Posterior vena cava (tissue), 2 donors: ENCODE measurements at regions of chr1 and their contacts with region 1.

Region 1: DNA sequence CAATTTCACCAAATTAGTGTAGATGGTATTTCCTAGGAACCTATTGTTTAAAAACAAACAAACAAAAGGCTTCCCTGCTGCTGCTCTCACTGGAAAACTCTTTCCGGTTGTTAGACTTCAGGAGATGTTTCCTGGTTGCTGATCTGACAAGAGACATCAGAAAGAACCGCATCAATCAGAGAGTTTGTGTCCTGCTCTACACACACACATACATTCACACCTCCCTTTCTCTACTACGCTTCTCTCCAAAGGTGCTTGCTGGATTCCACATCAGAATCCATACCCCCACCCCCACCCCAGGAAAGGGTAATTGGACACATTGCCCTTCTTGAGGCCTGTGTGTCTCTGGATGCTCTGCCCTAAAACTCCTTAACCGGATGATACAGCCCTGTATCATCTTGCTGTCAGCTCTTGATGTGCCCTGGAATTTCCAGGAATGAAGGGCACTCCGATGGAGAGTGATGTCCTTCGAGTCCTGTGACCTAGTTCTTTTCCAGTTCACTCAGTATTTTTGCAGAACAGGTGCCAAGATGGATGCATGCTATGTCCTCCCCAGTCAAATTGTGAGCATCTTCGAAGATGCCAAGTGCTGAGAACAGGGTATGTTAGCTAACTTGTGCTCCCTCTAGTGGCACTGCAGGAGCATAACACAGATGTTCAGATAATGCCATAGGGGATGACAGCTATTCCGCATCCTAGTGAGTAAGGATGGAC is 113.7 kb upstream of the SLC35F3 start:
- DNase-seq: no peak

Region 2: DNA sequence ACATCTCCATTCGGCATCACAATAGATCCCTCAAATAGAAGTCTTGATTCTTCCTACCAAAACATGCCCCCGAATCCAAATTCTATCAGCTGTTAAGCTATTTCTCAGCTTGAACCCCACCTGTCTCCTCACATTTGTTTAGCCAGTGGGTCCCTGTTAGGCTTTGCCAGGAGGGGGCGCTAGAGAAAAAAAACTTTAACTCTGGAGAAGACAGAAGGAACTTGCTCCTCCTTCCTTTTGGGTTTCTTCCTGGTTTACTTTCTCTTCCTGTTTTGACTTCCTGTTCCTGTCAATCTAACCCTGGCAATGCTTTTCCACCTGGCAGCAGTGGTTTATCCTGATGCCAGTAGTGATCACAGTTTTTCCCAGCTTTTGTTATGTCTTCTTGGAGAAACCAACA is 272.5 kb before region 1 on chr1:
- intact Hi-C with region 1: loop called in 1 of 2 experiments (anchors 10 kb)
- DNase-seq: no peak

Region 3: GRCh38 chr1:233613252-233614174 is 177.3 kb before region 1 on chr1 and contains the start of gene KCNK1:
- intact Hi-C with region 1: loop called in 1 of 2 experiments (anchors 10 kb)
- DNase-seq: peak; percentile 87
- total RNA-seq, gene KCNK1: 3.2 to 6.3 TPM

Region 4: DNA sequence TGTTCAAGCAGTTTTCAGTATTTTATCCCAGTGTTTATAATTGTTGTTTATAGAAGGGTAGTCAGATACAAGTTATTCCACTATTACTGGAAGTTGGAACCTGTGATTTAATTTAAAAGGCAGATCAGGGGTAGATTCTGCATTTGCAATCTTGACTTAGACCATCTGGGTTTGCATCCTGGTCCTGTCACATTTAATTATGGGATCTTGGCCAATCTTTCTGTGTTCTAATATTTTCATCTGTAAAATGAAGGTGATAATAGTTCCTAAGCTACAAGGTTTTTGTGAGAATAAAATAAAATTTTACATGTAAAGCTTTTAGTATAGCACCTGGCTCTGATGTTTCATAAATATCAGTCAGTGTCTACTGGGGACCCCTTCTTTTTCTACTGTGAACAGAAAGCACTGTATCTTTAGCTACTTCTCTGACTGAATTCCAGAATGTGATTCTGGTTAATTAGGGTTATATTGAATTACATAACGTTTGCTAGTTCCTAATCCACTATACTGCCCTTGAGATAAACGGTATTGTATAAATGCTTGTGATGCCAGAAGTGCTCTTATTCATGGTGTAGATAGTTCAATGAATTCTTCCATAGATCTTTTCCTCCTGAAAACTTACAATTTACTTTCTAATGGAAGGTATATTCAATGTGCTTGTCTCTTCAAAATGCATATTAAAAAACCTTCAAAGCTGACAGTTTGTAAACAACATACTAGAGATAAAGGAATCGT is 45.9 kb before region 1 on chr1:
- intact Hi-C with region 1: no loop called
- DNase-seq: no peak